ENCODE measurements at regions of chr7 and their contacts with region 1.

Region 1: DNA sequence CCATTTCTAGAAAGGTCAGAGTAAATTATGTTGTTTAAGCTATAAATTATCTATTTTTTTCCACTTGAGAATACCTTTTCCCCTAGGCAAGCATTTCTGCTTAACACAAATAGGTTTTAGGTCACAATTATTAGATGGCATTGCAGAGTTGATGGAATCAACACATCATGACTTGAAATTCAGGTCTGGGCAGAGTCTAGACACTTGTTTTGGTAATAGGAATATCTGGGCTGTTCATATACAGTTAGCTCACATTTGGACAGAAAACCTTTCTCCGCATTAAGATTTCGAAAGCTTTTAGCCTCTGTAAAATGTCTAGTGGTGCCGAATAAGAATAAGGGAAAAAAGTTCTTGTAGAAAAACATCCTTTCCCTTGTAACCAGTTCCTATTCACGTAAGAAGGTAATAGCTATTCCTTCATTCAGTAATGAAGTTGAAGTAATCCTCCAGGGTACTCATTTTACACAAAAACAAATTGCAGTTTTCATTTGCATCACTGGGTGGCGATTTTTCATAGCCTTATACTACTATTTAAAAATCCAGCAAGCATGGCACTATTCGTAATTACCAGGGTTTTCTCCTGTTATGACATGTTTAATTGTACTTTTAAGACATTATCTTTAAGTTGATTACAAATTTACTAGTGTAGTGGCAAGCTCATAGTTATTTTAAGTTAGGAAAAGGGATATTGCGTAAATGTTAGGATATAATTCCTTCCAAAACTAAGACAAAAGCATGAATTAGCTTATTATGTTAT is 37.0 kb downstream of the RPA3 start:
- DNase-seq: no peak

Region 2: DNA sequence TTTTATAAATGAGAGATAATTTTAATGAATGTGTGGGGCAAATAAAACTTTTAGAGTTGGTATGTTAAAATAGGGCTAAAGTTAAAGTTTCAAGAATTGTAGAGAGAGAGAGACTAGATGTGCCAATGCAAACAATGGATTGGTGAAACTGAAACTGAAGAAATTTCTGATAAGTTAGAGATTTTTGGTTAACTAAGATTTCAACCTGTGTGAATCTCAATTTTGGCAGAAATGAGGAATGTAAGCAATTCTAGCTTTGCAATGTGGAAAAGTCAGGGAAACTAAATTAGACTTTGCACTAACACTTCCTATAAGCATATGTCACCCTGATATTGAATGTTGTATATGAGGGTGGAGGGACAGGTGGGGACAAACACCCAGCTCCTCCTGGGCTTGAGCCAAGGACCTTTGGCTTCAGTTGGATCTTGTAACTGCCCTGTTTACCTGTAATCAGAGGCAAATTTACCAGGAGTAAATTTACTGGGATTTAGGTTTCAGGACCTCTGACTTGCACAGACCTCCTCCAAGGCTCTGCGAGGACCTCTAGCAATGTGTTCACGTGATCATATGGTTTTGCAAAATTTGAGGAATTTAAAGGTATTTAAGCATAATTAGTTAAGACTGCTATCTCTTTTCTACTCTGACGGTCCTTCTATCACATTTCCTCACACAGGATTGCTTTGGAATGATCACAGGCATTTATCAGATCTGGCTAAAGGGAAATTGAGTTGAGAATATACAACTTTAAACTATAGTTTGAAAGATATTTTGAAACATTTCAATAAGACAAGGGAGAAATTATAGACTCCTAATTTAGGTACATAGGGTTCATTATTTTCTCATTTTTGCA is 70.1 kb after region 1 on chr7:
- intact Hi-C with region 1: loop called in 1 of 2 experiments (anchors 10 kb)
- DNase-seq: no peak

Region 3: GRCh38 chr7:7761340-7761980 is 80.1 kb after region 1 on chr7:
- intact Hi-C with region 1: loop called (anchors 2 to 10 kb)
- DNase-seq: no peak

Region 4: GRCh38 chr7:7789551-7789988 is 108.2 kb after region 1 on chr7:
- intact Hi-C with region 1: no loop called
- DNase-seq: no peak